ENCODE measurements at regions of chr4 and their contacts with region 1.

Region 1: GRCh38 chr4:86924811-86925210 is 10.0 kb upstream of the AFF1 start:
- DNase-seq: no peak
- ATAC-seq: no peak

Region 2: DNA sequence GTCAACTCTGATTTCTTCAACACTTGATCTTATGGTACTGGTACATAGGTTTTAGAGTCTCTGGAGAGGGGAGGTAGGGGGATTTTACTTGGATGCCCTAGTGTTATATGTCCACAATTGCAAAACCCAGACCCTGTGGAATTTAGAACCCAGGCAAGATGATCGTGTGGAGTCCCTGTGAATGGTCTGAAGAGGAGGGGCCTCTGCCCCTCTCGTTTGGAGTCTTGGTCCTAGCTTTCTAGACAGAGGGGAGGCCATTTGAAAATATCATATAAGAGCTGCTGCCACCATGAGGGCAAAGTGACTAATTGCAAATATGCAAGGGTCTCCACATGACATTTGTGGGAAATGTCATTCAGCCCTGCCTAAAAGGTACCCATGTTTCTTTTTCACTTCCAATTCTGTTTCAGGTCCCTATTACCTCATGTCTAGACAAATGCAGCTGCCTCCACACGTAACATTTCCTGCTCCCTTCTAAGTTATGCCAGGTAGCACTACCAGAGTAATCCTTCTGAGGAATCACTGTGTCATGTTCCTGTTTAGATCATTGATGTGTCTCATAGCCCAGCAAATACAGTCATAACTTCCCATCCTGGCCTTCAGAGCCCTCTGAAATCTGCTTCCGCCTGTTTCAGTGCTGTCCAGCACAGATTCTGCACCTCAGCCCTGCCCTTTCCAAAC is 168.8 kb after region 1 on chr4:
- intact Hi-C with region 1: loop called (anchors 2 kb)
- DNase-seq: no peak
- ATAC-seq: peak; percentile 82

Region 3: GRCh38 chr4:87235020-87235671 is 310.3 kb after region 1 on chr4:
- intact Hi-C with region 1: loop called (anchors 5 kb)
- DNase-seq: no peak
- ATAC-seq: no peak

Measured in Right ventricle myocardium superior (tissue), 1 donor.